GM12878 (cell line): ENCODE measurements at regions of chr14 and their contacts with region 1.

Region 1: DNA sequence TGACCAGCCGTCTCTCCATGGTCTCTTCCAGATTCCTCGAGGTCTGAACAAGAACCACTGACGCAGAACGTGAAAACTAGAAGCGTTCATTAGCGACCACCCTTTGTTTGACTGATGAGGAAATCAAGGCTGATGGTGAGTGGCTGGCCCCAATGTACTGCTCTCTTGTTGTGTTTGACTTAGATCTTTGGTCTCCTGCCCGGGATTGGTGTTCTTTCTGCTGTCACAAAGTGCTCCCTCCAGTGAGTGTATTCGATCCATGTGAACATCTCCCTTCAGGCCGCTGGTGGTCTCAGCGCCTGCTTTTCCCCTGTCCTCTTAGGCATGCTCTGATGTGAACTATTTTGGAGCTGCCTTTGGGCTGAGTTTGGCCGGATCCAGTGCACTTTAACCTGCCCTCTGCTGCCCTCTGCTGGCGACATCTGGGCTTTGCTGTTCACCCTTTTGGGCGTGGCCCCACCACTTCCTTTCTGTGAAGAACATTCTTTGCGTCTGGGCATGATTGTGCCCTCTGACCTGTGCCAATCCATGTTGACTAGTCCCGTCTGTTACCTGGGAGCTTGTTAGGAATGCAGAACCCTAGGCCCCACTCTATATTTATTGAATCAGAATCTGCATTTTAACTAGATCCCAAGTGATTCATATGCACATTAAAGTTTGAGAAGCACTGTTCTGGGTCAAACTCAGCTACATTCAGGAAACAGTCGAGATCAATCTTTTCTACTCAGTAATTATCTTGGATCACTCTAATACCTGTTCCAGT is 279.2 kb downstream of the TTC6 start:
- DNase-seq: peak; percentile 8
- ATAC-seq: peak; percentile 98
- H3K4me3 ChIP-seq: no peak overlapping the region
- H3K27ac ChIP-seq: no peak overlapping the region
- H3K4me1 ChIP-seq: no peaks in the 10 kb centered on the region
- H3K27me3 ChIP-seq: no peaks in the 10 kb centered on the region
- CTCF ChIP-seq: peak; percentile 77 to 86 (median 78)
- EP300 ChIP-seq: no peak
- POLR2A ChIP-seq: no peak
- RAD21 ChIP-seq: peak; percentile 81

Region 2: GRCh38 chr14:37241198-37241597 is 633.4 kb before region 1 on chr14:
- CTCF ChIA-PET with region 1: interaction called, 30 read pairs
- POLR2A ChIA-PET with region 1: no interaction called
- RAD21 ChIA-PET with region 1: interaction called, 4 read pairs
- SMC1A ChIA-PET with region 1: interaction called, 3 read pairs
- in situ Hi-C with region 1: loop called (anchors 5 kb)
- intact Hi-C with region 1: loop called (anchors 1 kb)
- DNase-seq: no peak
- ATAC-seq: no peak
- H3K4me3 ChIP-seq: no peak overlapping the region
- H3K27ac ChIP-seq: no peak overlapping the region
- H3K4me1 ChIP-seq: no peaks in the 10 kb centered on the region
- H3K27me3 ChIP-seq: no peaks in the 10 kb centered on the region; a peak in 1 of 4 replicates
- CTCF ChIP-seq: no peak
- EP300 ChIP-seq: no peak
- POLR2A ChIP-seq: no peak
- RAD21 ChIP-seq: no peak

Region 3: GRCh38 chr14:37246427-37246914 is 628.1 kb before region 1 on chr14:
- CTCF ChIA-PET with region 1: interaction called, 30 read pairs
- POLR2A ChIA-PET with region 1: no interaction called
- RAD21 ChIA-PET with region 1: interaction called, 4 read pairs
- SMC1A ChIA-PET with region 1: interaction called, 3 read pairs
- in situ Hi-C with region 1: no loop called
- intact Hi-C with region 1: loop called (anchors 1 kb)
- DNase-seq: no peak
- ATAC-seq: no peak
- H3K4me3 ChIP-seq: no peak overlapping the region
- H3K27ac ChIP-seq: no peak overlapping the region
- H3K4me1 ChIP-seq: no peaks in the 10 kb centered on the region
- H3K27me3 ChIP-seq: no peaks in the 10 kb centered on the region
- CTCF ChIP-seq: peak; percentile 52 to 57 (median 54); a peak in 5 of 6 replicates
- EP300 ChIP-seq: no peak
- POLR2A ChIP-seq: no peak
- RAD21 ChIP-seq: peak; percentile 67

Region 4: DNA sequence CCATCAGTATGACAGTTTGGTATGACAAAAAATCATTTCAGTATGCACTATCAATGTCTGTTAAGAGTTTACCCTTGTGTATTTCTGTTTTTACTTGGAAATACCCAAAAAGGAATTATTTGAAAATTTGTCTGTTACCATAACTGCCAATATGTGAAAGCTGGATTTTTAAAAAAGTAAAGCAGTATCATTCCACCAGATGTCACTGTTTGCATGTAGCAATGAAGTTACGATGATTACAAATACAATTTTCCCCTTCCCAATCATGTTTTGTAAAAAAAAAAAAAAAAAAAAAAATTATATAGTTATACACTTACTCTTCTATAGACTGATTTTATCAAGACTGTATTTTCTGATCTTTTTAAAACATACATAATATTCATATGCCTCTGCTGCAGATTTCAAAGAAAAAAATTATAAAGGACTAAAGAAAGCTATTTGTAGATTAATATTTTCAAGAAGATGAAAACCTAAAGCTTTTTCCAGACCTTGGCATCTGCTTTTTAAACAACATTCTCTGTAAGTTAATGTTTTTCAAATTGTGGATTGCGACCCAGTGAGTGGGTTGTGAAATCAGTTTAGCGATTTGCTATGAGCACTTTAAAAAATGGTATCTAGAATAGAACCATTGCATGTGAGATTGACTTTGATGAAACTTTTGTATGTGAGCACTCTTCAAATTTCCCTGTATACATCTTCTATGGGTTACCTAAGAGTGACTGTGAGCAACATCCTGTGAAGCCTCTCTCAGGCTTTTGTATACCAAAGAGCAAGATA is 165.0 kb before region 1 on chr14:
- CTCF ChIA-PET with region 1: interaction called, 7 read pairs
- POLR2A ChIA-PET with region 1: no interaction called
- RAD21 ChIA-PET with region 1: no interaction called
- SMC1A ChIA-PET with region 1: interaction called, 3 read pairs
- in situ Hi-C with region 1: no loop called
- intact Hi-C with region 1: loop called (anchors 5 kb)
- DNase-seq: no peak
- ATAC-seq: no peak
- H3K4me3 ChIP-seq: no peak overlapping the region
- H3K27ac ChIP-seq: no peak overlapping the region
- H3K4me1 ChIP-seq: no peaks in the 10 kb centered on the region
- H3K27me3 ChIP-seq: no peaks in the 10 kb centered on the region
- CTCF ChIP-seq: no peak; a peak in 1 of 6 replicates
- EP300 ChIP-seq: no peak
- POLR2A ChIP-seq: no peak
- RAD21 ChIP-seq: no peak